Panc1 (cell line): ENCODE measurements at regions of chr10 and their contacts with region 1.

Region 1: DNA sequence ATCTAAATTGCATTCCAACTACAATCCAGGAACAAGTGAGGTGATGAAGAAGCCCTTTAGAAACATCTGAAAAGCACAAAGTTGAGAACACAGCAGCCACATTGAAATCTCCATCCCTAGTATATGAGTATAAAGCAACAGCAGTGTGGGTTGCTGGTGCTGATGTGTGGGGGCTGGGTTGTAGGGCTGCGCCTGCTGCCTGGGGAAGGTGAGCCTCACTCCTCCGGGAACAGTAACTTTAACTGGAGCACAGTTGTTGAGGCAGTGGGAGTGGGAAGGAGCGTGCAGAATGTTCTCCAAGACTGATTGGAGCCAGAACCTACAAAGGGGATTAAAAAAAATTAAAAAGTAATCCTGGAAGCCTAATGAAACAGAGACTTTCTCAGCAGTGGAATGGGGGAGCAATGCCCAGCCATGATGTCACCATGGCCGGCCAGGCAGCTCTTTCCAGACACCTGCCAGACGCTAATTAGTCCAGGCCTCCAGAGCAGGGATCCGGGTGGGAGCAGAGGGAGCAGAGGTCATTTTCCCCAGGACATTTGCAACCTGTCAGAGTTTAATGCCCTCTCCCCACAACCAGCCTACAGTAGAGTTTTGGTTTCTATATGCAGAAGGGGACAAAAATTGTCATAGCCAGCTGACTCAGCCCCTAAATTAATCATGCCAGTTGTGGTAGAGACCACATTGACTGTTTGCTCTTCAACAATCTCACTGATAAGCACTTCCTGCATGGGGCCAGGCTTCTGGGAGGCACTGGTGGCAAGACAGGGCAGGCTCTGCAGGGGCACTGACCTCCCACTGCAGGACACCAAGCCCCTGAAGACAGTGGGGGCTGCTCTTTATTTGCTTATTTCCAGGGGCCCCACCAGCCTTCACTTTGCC is 133.0 kb upstream of the ZNF32 start:
- DNase-seq: no peak
- ATAC-seq: no peak
- H3K4me3 ChIP-seq: no peak overlapping the region
- H3K27ac ChIP-seq: no peak overlapping the region
- H3K4me1 ChIP-seq: no peaks in the 10 kb centered on the region
- H3K27me3 ChIP-seq: no peaks in the 10 kb centered on the region; the same call in 1 of the 2 replicates
- CTCF ChIP-seq: no peak

Region 2: GRCh38 chr10:43105102-43105785 is 676.5 kb before region 1 on chr10:
- CTCF ChIA-PET with region 1: no interaction called
- POLR2A ChIA-PET with region 1: no interaction called
- in situ Hi-C with region 1: no loop called
- intact Hi-C with region 1: no loop called
- DNase-seq: peak; percentile 45
- ATAC-seq: peak; percentile 91
- H3K4me3 ChIP-seq: peak overlapping the region; percentile 55 to 68
- H3K27ac ChIP-seq: peak overlapping the region; percentile 75
- H3K4me1 ChIP-seq: peaks cover 16% of the 10 kb centered on the region
- H3K27me3 ChIP-seq: no peaks in the 10 kb centered on the region
- CTCF ChIP-seq: peak; percentile 100

Region 3: GRCh38 chr10:43689955-43690771 is 91.6 kb before region 1 on chr10:
- CTCF ChIA-PET with region 1: no interaction called
- POLR2A ChIA-PET with region 1: no interaction called
- in situ Hi-C with region 1: no loop called
- intact Hi-C with region 1: loop called (anchors 10 kb)
- DNase-seq: no peak
- ATAC-seq: peak; percentile 99
- H3K4me3 ChIP-seq: peak overlapping the region; percentile 62 to 91
- H3K27ac ChIP-seq: peak overlapping the region; percentile 70
- H3K4me1 ChIP-seq: no peaks in the 10 kb centered on the region
- H3K27me3 ChIP-seq: peaks cover 7% of the 10 kb centered on the region
- CTCF ChIP-seq: peak; percentile 100